Body of pancreas (tissue), 4 donors: ENCODE measurements at regions of chr2 and their contacts with region 1.

Region 1: GRCh38 chr2:64516628-64517510 is 7.3 kb upstream of the AFTPH start:
- DNase-seq: no peak
- ATAC-seq: no peak
- H3K4me3 ChIP-seq: no peak overlapping the region
- H3K27ac ChIP-seq: no peak overlapping the region
- H3K4me1 ChIP-seq: no peaks in the 10 kb centered on the region
- H3K27me3 ChIP-seq: no peaks in the 10 kb centered on the region
- CTCF ChIP-seq: no peak
- POLR2A ChIP-seq: no peak

Region 2: DNA sequence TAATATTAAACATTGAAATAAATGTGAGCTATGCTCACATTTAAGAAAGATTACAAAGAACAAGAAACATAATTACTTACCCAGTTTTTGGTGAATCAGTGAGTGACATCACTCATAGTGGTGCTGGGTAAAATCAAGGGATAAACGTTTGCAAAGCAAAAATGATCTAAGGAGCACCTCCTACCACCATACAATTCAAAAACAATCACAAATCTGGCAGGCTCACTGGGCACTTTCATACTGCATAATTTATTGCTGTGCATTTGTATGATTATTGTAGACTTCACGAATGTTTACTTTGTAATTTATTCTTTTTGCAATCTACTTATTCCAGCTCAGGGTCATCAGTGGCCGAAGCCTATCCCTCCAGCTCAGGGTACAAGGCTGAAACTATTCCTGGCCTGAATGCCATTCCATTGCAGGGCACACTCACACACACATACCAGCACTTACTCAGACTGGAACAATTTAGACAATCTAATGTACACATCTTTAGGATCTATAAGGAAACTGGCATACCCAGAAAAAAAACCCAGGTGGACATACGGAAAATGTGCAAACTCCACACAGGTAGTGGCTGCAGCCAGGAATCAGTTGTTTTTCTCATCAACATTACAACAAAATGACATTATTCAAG is 41.7 kb after region 1 on chr2:
- intact Hi-C with region 1: loop called (anchors 5 kb)
- DNase-seq: no peak
- ATAC-seq: no peak
- H3K4me3 ChIP-seq: no peak overlapping the region
- H3K27ac ChIP-seq: no peak overlapping the region
- H3K4me1 ChIP-seq: peaks cover 14% of the 10 kb centered on the region
- H3K27me3 ChIP-seq: no peaks in the 10 kb centered on the region
- CTCF ChIP-seq: no peak
- POLR2A ChIP-seq: no peak